ENCODE measurements at regions of chr18 and their contacts with region 1.

Region 1: GRCh38 chr18:13159579-13159978 is 59.0 kb upstream of the LDLRAD4 start:
- DNase-seq: no peak
- ATAC-seq: peak; percentile 82
- H3K4me3 Mint-ChIP-seq: no peak overlapping the region
- H3K27ac Mint-ChIP-seq: no peak overlapping the region
- H3K4me1 Mint-ChIP-seq: peaks cover 4% of the 10 kb centered on the region
- H3K27me3 Mint-ChIP-seq: peaks cover 3% of the 10 kb centered on the region; the same call in 1 of the 2 replicates
- CTCF ChIP-seq: peak; percentile 82

Region 2: DNA sequence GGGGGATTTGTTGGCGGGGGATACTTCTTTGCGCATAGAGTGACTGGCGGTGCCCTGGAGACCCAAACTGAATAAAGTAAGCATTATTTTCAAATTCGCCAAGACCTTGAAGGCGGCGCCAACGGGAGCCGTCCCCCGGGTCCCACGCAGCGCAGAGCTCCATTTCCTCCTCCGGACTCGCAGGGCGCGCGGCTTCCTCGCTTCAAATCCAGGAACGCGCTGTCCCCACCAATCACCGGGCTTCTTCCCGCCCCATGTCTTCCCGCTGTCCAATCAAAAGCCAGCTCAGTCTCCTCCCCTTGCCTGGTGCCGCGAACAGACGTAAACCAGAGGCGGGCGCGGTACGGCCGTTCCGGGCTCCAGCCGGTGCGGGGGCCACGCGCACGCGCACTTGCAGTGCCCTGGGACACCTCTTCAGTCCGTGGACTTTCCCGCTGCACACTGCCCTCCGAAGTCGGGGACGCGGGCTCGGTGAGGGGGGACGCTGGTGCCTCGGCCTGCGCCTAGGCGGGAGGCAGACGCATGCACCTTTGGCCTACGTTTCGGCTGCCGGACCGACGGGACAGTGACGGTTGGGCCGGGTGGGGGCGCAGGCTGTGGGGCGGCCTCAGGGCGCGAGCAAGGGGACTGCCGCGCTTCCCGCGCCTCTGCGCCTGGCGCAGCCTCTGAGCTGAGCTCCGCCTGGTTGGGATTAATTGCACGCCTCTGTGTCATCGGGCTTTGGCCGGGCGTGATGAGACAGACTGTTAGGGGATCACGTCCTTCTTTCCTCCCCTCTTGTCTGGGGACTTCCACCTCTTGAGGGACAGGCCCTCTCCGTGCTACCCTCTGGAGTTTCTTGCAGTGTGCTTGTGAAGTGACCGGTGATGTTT is 168.4 kb before region 1 on chr18 and contains the start of gene CEP192:
- CTCF ChIA-PET with region 1: interaction called, 11 read pairs
- POLR2A ChIA-PET with region 1: no interaction called
- DNase-seq: peak; percentile 95
- ATAC-seq: peak; percentile 91
- H3K4me3 Mint-ChIP-seq: peak within 1 kb of the TSS; percentile 95
- H3K27ac Mint-ChIP-seq: peak within 1 kb of the TSS; percentile 96
- H3K4me1 Mint-ChIP-seq: peaks cover 13% of the 10 kb centered on the region
- H3K27me3 Mint-ChIP-seq: no peaks in the 10 kb centered on the region
- CTCF ChIP-seq: no peak
- total RNA-seq, gene CEP192: 24.3 to 26.8 TPM (median 25.4 TPM) in 3 replicates

Region 3: GRCh38 chr18:13051950-13052349 is 107.6 kb before region 1 on chr18:
- CTCF ChIA-PET with region 1: no interaction called
- POLR2A ChIA-PET with region 1: no interaction called
- DNase-seq: no peak
- ATAC-seq: no peak
- H3K4me3 Mint-ChIP-seq: no peak overlapping the region
- H3K27ac Mint-ChIP-seq: 0 out of 2 replicates have a peak overlapping the region, but pooled peaks have one; percentile 25
- H3K4me1 Mint-ChIP-seq: no peaks in the 10 kb centered on the region
- H3K27me3 Mint-ChIP-seq: no peaks in the 10 kb centered on the region
- CTCF ChIP-seq: no peak

Region 4: DNA sequence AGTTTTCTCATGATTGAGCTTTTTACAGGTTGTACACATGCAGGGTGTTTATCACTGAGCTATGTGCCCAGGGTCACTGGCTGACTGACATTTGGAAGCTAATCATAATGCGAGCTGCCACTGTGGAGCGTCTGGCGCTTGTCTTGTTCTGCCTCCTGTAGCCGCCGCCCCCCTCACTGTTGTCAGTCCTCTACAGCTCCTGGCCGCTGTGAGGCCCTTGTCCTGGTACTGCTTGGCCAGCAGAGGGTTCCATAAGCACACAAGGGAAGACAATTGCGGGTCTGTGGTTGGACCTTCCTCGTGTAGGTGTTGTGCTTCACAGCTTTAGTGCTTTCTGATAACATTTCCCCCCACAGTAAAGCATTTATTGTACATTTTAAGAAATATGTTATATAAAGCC is 46.6 kb before region 1 on chr18:
- CTCF ChIA-PET with region 1: interaction called, 71 read pairs
- POLR2A ChIA-PET with region 1: no interaction called
- DNase-seq: peak; percentile 82
- ATAC-seq: peak; percentile 100
- H3K4me3 Mint-ChIP-seq: no peak overlapping the region
- H3K27ac Mint-ChIP-seq: no peak overlapping the region
- H3K4me1 Mint-ChIP-seq: no peaks in the 10 kb centered on the region; the same call in 1 of the 2 replicates
- H3K27me3 Mint-ChIP-seq: no peaks in the 10 kb centered on the region
- CTCF ChIP-seq: no peak

Region 5: DNA sequence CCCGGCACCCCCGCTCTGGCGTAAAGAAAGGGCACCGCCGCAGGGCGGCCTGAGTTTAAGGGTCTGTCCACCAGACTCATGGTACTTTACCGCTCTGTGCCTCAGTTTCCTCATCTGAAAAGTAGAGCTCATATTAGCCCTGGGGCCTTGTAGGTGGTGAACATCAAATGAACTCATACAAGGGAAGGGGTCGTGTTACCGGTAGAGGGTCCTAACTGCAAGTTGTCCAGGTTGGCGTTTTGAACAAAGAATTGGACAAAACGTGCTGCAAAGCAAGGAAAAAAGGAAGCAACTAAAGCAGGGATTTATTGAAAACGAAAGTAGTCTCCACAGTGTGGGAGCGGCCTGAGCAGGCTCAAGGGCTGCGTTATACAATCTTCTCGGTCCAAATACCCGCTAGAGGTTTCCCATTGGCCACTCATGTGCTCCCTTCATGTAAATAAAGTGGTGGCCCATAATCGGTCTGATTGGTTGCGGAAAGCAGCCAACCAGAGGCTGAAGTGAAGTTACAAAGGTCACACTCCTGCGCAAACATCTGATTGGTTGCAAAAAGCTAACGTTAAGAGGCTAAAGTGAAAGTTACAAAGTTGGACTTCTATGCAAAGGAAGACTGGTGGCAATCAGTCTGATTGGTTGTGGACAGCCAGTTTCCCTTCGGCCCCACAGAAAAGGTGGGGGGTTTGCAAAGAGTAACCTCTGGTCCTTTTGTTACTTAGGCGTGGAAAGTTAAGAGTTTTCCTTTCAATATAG is 21.7 kb before region 1 on chr18:
- CTCF ChIA-PET with region 1: interaction called, 14 read pairs
- POLR2A ChIA-PET with region 1: no interaction called
- DNase-seq: no peak
- ATAC-seq: no peak
- H3K4me3 Mint-ChIP-seq: peak overlapping the region; percentile 62
- H3K27ac Mint-ChIP-seq: no peak overlapping the region
- H3K4me1 Mint-ChIP-seq: peaks cover 11% of the 10 kb centered on the region; the same call in 1 of the 2 replicates
- H3K27me3 Mint-ChIP-seq: peaks cover 47% of the 10 kb centered on the region
- CTCF ChIP-seq: no peak

Region 6: GRCh38 chr18:13175754-13176210 is 16.2 kb after region 1 on chr18:
- CTCF ChIA-PET with region 1: interaction called, 10 read pairs
- POLR2A ChIA-PET with region 1: no interaction called
- DNase-seq: no peak
- ATAC-seq: no peak
- H3K4me3 Mint-ChIP-seq: no peak overlapping the region
- H3K27ac Mint-ChIP-seq: no peak overlapping the region
- H3K4me1 Mint-ChIP-seq: peaks cover 19% of the 10 kb centered on the region
- H3K27me3 Mint-ChIP-seq: peaks cover 20% of the 10 kb centered on the region
- CTCF ChIP-seq: no peak

Region 7: DNA sequence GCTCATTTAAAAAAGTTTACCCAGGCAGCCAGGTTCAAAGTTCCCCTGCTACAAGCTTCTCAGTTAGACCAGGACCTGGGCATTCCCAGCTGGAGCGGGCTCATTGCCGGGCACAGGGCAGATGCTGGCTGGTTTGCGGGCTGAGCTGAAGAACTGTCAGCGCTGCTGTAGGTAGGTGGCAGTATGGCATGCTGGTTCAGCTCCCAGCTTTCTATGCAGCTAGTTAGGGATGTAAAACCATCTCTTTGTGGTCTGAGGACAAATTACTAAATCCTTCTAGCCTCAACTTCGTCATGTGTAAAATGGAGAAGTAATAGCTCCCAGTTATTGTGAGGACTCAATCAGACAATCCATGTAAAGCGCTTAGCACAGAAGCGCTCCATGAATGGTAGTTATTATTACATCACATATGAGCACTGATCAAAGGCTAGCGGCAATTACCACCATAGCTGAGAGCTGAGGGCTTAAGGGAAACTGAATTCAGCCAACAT is 56.6 kb after region 1 on chr18:
- CTCF ChIA-PET with region 1: interaction called, 25 read pairs
- POLR2A ChIA-PET with region 1: no interaction called
- DNase-seq: peak; percentile 51
- ATAC-seq: peak; percentile 46
- H3K4me3 Mint-ChIP-seq: peak overlapping the region; percentile 77
- H3K27ac Mint-ChIP-seq: no peak overlapping the region
- H3K4me1 Mint-ChIP-seq: peaks cover 27% of the 10 kb centered on the region
- H3K27me3 Mint-ChIP-seq: peaks cover 54% of the 10 kb centered on the region
- CTCF ChIP-seq: no peak